Activated B cell treated with CpG ODN at 0.5 μM for 24 hours (primary cell): ENCODE measurements at regions of chr2 and their contacts with region 1.

Region 1: DNA sequence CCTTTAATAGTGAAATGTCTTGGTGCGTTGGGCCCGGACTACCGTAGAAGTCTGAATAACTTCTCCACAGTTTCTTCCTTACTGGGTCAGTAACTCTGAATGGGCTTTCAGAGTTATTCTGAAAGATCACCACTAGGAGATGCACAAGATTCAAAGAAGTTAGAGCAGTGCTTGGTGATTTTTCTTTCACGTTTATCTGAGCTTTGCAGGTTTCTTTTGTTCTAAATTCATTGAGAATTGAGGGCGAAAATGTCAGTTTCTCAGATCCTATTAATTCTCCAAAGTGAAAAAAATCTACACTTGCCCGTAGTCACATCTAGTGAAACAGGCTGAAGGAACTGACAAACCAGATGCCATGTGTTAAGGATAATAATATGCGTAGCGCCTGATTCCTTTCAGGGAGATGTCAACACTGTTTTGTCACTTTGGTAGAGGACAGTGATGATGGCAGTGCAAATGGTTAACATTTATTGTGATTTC is 70.1 kb downstream of the QPCT start:
- DNase-seq: no peak
- ATAC-seq: peak; percentile 61
- H3K4me3 Mint-ChIP-seq: no peak overlapping the region
- H3K27ac Mint-ChIP-seq: no peak overlapping the region
- H3K4me1 Mint-ChIP-seq: peaks cover 6% of the 10 kb centered on the region
- H3K27me3 Mint-ChIP-seq: no peaks in the 10 kb centered on the region
- CTCF ChIP-seq: peak; percentile 60

Region 2: GRCh38 chr2:37665604-37666362 is 251.3 kb after region 1 on chr2:
- CTCF ChIA-PET with region 1: interaction called, 3 read pairs
- POLR2A ChIA-PET with region 1: interaction called, 13 read pairs
- intact Hi-C with region 1: no loop called
- DNase-seq: no peak
- ATAC-seq: no peak
- H3K4me3 Mint-ChIP-seq: no peak overlapping the region
- H3K27ac Mint-ChIP-seq: peak overlapping the region; percentile 59
- H3K4me1 Mint-ChIP-seq: peaks cover 83% of the 10 kb centered on the region
- H3K27me3 Mint-ChIP-seq: no peaks in the 10 kb centered on the region
- CTCF ChIP-seq: no peak

Region 3: DNA sequence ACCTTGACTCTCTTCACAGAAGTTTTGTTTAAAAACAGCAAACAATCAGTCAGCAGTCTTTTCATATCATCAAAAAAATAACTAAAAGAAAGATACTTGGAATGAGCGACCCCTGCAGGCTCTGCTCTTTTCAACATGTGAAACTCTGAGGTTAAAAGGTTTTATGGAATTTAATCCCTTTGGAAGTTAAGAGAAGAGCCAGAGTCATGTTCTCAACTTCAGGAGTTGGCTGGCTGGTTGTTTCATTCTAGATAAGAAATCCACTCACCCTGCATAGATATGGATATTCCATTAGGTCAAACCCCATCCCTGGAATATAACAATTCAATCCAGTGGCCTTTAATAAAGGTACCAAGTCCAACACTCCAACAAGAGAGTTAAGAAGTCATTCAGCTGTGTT is 395.0 kb after region 1 on chr2:
- CTCF ChIA-PET with region 1: interaction called, 13 read pairs
- POLR2A ChIA-PET with region 1: no interaction called
- intact Hi-C with region 1: loop called (anchors 1 kb)
- DNase-seq: no peak
- ATAC-seq: no peak
- H3K4me3 Mint-ChIP-seq: no peak overlapping the region
- H3K27ac Mint-ChIP-seq: no peak overlapping the region
- H3K4me1 Mint-ChIP-seq: no peaks in the 10 kb centered on the region
- H3K27me3 Mint-ChIP-seq: no peaks in the 10 kb centered on the region
- CTCF ChIP-seq: no peak

Region 4: DNA sequence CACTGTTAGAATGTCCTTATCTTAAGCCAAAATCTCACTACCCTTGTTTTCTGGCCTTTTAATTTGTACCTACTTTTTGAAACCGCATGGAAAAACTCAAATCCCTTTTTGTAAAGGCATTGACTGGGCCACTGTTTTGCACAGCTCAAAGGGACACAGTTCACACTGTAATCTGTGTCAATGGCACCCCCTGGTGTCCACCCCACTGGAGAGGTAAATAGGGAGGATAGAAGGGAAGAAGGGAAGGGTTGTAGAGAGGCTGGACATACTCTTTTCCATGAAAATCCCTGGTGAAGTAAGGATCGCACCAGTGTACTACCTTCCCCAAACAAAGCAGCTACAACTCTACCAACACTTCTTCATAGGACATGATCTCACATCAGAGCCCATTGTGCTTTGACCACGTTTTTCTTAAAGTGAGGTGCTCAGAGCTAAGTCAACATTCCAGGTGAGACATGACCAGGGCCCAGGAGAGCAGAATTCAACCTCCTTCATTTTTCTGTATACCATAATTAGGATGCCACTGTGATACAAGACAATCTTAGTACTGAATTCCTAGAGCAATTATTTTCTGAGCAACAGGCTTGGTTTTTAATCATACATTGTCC is 418.2 kb after region 1 on chr2:
- CTCF ChIA-PET with region 1: interaction called, 289 read pairs
- POLR2A ChIA-PET with region 1: interaction called, 17 read pairs
- intact Hi-C with region 1: loop called (anchors 1 kb)
- DNase-seq: peak; percentile 61
- ATAC-seq: peak; percentile 96
- H3K4me3 Mint-ChIP-seq: no peak overlapping the region
- H3K27ac Mint-ChIP-seq: no peak overlapping the region
- H3K4me1 Mint-ChIP-seq: peaks cover 1% of the 10 kb centered on the region
- H3K27me3 Mint-ChIP-seq: no peaks in the 10 kb centered on the region
- CTCF ChIP-seq: peak; percentile 55

Region 5: DNA sequence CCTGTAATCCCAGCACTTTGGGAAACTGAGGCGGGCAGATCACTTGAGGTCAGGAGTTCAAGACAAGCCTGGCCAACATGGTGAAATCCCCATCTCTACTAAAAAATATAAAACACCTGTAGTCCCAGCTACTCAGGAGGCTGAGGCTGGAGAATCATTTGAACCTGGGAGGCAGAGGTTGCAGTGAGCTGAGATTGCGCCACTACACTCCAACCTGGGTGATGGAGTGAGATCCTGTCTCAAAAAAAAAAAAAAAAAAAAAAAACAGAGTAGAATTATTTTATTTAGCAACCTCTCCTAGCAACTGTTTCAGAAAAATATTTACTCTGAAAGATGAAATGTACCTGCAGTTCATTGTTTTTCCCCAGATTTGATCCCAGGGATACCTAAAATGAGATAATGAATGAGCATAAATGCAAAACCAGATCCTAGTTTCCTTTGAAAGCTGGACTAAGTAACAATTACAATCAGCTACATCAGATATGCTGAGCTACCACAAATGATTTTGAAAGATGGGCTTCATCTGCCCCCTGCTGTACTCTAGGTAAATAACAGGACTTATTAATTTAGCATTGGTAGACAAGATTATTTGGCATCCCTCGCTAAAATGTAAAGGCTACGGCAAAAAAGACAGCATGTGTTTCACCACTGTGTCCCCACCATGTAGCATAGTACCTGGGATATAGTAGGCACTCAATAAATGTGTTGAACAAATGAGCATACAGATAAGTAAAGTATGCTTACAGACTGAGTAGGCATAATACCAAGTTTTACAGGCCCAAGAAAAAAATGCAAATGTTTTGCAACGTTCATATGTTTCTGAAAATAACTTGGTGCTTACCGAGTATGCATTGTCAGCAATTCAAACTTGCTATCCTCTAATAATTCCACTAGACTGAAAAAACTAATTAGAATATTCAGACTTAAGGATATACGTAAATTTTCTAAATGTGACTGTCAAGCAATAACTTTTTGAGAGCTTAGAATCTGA is 860.1 kb after region 1 on chr2:
- CTCF ChIA-PET with region 1: interaction called, 3 read pairs
- POLR2A ChIA-PET with region 1: no interaction called
- intact Hi-C with region 1: loop called (anchors 5 kb)
- DNase-seq: no peak
- ATAC-seq: peak; percentile 56
- H3K4me3 Mint-ChIP-seq: no peak overlapping the region
- H3K27ac Mint-ChIP-seq: no peak overlapping the region
- H3K4me1 Mint-ChIP-seq: peaks cover 3% of the 10 kb centered on the region
- H3K27me3 Mint-ChIP-seq: no peaks in the 10 kb centered on the region
- CTCF ChIP-seq: no peak